Endothelial cell of umbilical vein (primary cell): ENCODE measurements at regions of chr2 and their contacts with region 1.

Region 1: GRCh38 chr2:217886720-217887309 is 116.0 kb downstream of the TNS1 start:
- DNase-seq: peak; percentile 71
- H3K4me3 ChIP-seq: no peak overlapping the region
- H3K27ac ChIP-seq: no peak overlapping the region
- H3K4me1 ChIP-seq: peaks cover 17% of the 10 kb centered on the region
- H3K27me3 ChIP-seq: no peaks in the 10 kb centered on the region
- CTCF ChIP-seq: peak; percentile 78 to 80
- POLR2A ChIP-seq: no peak

Region 2: GRCh38 chr2:217802876-217803652 is 83.8 kb before region 1 on chr2:
- CTCF ChIA-PET with region 1: interaction called, 11 read pairs
- POLR2A ChIA-PET with region 1: no interaction called
- dilution Hi-C with region 1: no loop called
- intact Hi-C with region 1: no loop called
- DNase-seq: no peak
- H3K4me3 ChIP-seq: no peak overlapping the region
- H3K27ac ChIP-seq: no peak overlapping the region
- H3K4me1 ChIP-seq: no peaks in the 10 kb centered on the region
- H3K27me3 ChIP-seq: no peaks in the 10 kb centered on the region
- CTCF ChIP-seq: no peak
- POLR2A ChIP-seq: no peak

Region 3: GRCh38 chr2:217816396-217816869 is 70.4 kb before region 1 on chr2:
- CTCF ChIA-PET with region 1: interaction called, 12 read pairs
- POLR2A ChIA-PET with region 1: no interaction called
- dilution Hi-C with region 1: no loop called
- intact Hi-C with region 1: loop called (anchors 1 kb)
- DNase-seq: peak; percentile 96
- H3K4me3 ChIP-seq: no peak overlapping the region
- H3K27ac ChIP-seq: peak overlapping the region; percentile 88
- H3K4me1 ChIP-seq: peaks cover 36% of the 10 kb centered on the region
- H3K27me3 ChIP-seq: no peaks in the 10 kb centered on the region
- CTCF ChIP-seq: no peak
- POLR2A ChIP-seq: no peak

Region 4: DNA sequence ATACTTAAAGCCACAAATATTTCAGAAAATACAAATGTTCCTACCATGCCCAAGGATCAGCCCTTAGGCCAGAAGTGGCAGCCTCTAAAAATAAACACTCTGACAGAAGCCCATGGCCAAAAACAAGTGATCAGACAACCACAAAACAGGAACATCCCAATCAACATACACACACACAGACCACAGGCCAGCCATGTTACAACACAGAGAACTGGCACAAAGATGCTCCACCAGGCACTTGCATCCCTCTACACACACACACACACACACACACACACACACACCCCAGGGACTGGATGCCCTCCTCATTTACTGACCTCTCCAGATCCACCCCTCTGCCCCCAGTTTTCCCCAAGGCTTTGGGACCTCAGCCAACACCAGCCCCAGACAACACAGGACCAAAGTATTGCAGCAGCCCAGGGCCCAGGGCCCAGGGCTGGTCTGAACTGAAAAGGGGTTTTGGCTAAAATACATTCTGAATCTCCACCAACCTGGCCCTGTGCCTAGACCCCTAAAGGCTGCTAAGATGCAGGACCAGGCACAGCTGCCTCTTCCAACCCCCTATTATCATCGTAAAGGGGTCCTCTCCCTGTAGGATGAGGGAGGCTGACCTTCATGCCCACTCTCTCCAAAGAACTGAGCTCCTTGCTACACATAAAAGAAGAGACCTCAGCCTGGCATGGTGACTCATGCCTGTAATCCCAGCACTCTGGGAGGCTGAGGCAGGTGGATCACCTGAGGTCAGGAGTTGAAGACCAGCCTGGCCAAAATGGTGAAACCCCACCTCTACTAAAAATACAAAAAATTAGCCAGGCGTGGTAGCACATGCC is 35.4 kb before region 1 on chr2:
- CTCF ChIA-PET with region 1: interaction called, 17 read pairs
- POLR2A ChIA-PET with region 1: interaction called, 3 read pairs
- dilution Hi-C with region 1: no loop called
- intact Hi-C with region 1: loop called (anchors 1 kb)
- DNase-seq: peak; percentile 18
- H3K4me3 ChIP-seq: no peak overlapping the region
- H3K27ac ChIP-seq: no peak overlapping the region
- H3K4me1 ChIP-seq: peaks cover 33% of the 10 kb centered on the region
- H3K27me3 ChIP-seq: no peaks in the 10 kb centered on the region
- CTCF ChIP-seq: no peak
- POLR2A ChIP-seq: no peak

Region 5: GRCh38 chr2:217899231-217900009 is 12.6 kb after region 1 on chr2:
- CTCF ChIA-PET with region 1: interaction called, 19 read pairs
- POLR2A ChIA-PET with region 1: no interaction called
- dilution Hi-C with region 1: no loop called
- intact Hi-C with region 1: loop called (anchors 1 kb)
- DNase-seq: no peak
- H3K4me3 ChIP-seq: no peak overlapping the region
- H3K27ac ChIP-seq: no peak overlapping the region
- H3K4me1 ChIP-seq: peaks cover 35% of the 10 kb centered on the region
- H3K27me3 ChIP-seq: no peaks in the 10 kb centered on the region
- CTCF ChIP-seq: peak; percentile 47 to 63
- POLR2A ChIP-seq: no peak

Region 6: GRCh38 chr2:217988014-217988839 is 101.4 kb after region 1 on chr2:
- CTCF ChIA-PET with region 1: interaction called, 60 read pairs
- POLR2A ChIA-PET with region 1: no interaction called
- dilution Hi-C with region 1: no loop called
- intact Hi-C with region 1: loop called (anchors 1 kb)
- DNase-seq: peak; percentile 69
- H3K4me3 ChIP-seq: no peak overlapping the region
- H3K27ac ChIP-seq: no peak overlapping the region
- H3K4me1 ChIP-seq: peaks cover 21% of the 10 kb centered on the region
- H3K27me3 ChIP-seq: no peaks in the 10 kb centered on the region
- CTCF ChIP-seq: peak; percentile 85 to 89
- POLR2A ChIP-seq: no peak

Region 7: GRCh38 chr2:218033590-218034496 is 147.0 kb after region 1 on chr2:
- CTCF ChIA-PET with region 1: interaction called, 11 read pairs
- POLR2A ChIA-PET with region 1: no interaction called
- dilution Hi-C with region 1: no loop called
- intact Hi-C with region 1: loop called (anchors 1 kb)
- DNase-seq: no peak
- H3K4me3 ChIP-seq: no peak overlapping the region
- H3K27ac ChIP-seq: no peak overlapping the region
- H3K4me1 ChIP-seq: no peaks in the 10 kb centered on the region
- H3K27me3 ChIP-seq: peaks cover 26 to 27% of the 10 kb centered on the region in 2 experiments
- CTCF ChIP-seq: no peak
- POLR2A ChIP-seq: no peak